ENCODE measurements at regions of chr19 and their contacts with region 1.

Region 1: GRCh38 chr19:14472202-14472938 is 2.8 kb downstream of the PTGER1 start:
- DNase-seq: peak; percentile 65 to 94 (median 82)
- ATAC-seq: peak; percentile 85
- H3K4me3 ChIP-seq: peak overlapping the region; percentile 55
- H3K4me3 Mint-ChIP-seq: peak overlapping the region; percentile 25 to 84 (median 68)
- H3K27ac ChIP-seq: no peak overlapping the region
- H3K27ac Mint-ChIP-seq: peak overlapping the region in 1 of 9 donors; percentile 41
- H3K4me1 ChIP-seq: peaks cover 4 to 17% of the 10 kb centered on the region in 2 donors
- H3K4me1 Mint-ChIP-seq: peaks cover 0 to 39% (median 29%) of the 10 kb centered on the region in 7 donors
- H3K27me3 ChIP-seq: peaks cover 0 to 4% of the 10 kb centered on the region in 2 donors
- H3K27me3 Mint-ChIP-seq: peaks cover 6 to 19% (median 12%) of the 10 kb centered on the region in 5 donors

Region 2: GRCh38 chr19:14354445-14354844 is 117.9 kb before region 1 on chr19:
- CTCF ChIA-PET with region 1: interaction called, 5 read pairs
- POLR2A ChIA-PET with region 1: no interaction called
- intact Hi-C with region 1: loop called in 1 of 2 experiments (anchors 10 kb)
- DNase-seq: no peak
- ATAC-seq: no peak
- H3K4me3 ChIP-seq: no peak overlapping the region
- H3K4me3 Mint-ChIP-seq: peak overlapping the region in 1 of 10 donors; percentile 13
- H3K27ac ChIP-seq: peak overlapping the region; percentile 7
- H3K27ac Mint-ChIP-seq: peak overlapping the region in 5 of 9 donors; percentile 25 to 99 (median 95)
- H3K4me1 ChIP-seq: peaks cover 13 to 32% of the 10 kb centered on the region in 2 donors
- H3K4me1 Mint-ChIP-seq: peaks cover 27 to 51% (median 40%) of the 10 kb centered on the region in 7 donors
- H3K27me3 ChIP-seq: no peaks in the 10 kb centered on the region
- H3K27me3 Mint-ChIP-seq: no peaks in the 10 kb centered on the region

Region 3: GRCh38 chr19:14405758-14406644 is 66.4 kb before region 1 on chr19:
- CTCF ChIA-PET with region 1: no interaction called
- POLR2A ChIA-PET with region 1: no interaction called
- intact Hi-C with region 1: no loop called
- DNase-seq: peak; percentile 85 to 96 (median 91)
- ATAC-seq: peak; percentile 76
- H3K4me3 ChIP-seq: no peak overlapping the region
- H3K4me3 Mint-ChIP-seq: peak overlapping the region in 1 of 10 donors; percentile 12
- H3K27ac ChIP-seq: peak overlapping the region; percentile 54
- H3K27ac Mint-ChIP-seq: peak overlapping the region; percentile 58 to 85 (median 60)
- H3K4me1 ChIP-seq: peaks cover 8 to 25% of the 10 kb centered on the region in 2 donors
- H3K4me1 Mint-ChIP-seq: peaks cover 6 to 26% (median 20%) of the 10 kb centered on the region in 7 donors
- H3K27me3 ChIP-seq: no peaks in the 10 kb centered on the region
- H3K27me3 Mint-ChIP-seq: no peaks in the 10 kb centered on the region

Region 4: GRCh38 chr19:14556662-14557188 is 84.4 kb after region 1 on chr19:
- CTCF ChIA-PET with region 1: interaction called, 6 read pairs
- POLR2A ChIA-PET with region 1: interaction called, 3 read pairs
- intact Hi-C with region 1: loop called in 1 of 2 experiments (anchors 1 kb)
- DNase-seq: peak; percentile 42 to 75 (median 60)
- ATAC-seq: peak; percentile 91
- H3K4me3 ChIP-seq: peak overlapping the region; percentile 10
- H3K4me3 Mint-ChIP-seq: peak overlapping the region; percentile 29 to 79 (median 68)
- H3K27ac ChIP-seq: no peak overlapping the region
- H3K27ac Mint-ChIP-seq: peak overlapping the region in 8 of 9 donors; percentile 79 to 90 (median 84)
- H3K4me1 ChIP-seq: peaks cover 15 to 53% of the 10 kb centered on the region in 2 donors
- H3K4me1 Mint-ChIP-seq: peaks cover 28 to 71% (median 40%) of the 10 kb centered on the region in 7 donors
- H3K27me3 ChIP-seq: no peaks in the 10 kb centered on the region
- H3K27me3 Mint-ChIP-seq: no peaks in the 10 kb centered on the region

Region 5: DNA sequence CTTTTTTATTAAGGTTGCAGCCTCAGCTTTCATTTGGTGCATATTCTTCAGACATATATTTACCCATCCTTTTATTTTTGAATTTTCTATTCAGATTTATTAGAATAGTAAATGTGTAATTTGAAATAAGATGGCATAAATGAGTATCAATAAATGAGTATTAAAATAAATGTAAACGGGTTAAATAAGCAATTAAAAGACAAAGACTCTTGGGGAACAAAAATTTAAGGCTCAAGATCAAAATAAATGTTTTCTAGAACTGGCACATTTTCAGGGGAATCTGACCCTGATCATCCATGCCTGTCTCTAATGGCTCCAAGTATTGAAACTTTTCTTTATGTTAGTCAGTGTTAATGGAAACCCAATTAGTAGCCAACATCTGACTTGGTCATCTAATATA is 1268.4 kb after region 1 on chr19:
- CTCF ChIA-PET with region 1: no interaction called
- POLR2A ChIA-PET with region 1: no interaction called
- intact Hi-C with region 1: no loop called
- DNase-seq: no peak
- ATAC-seq: no peak
- H3K4me3 ChIP-seq: no peak overlapping the region
- H3K4me3 Mint-ChIP-seq: no peak overlapping the region
- H3K27ac ChIP-seq: no peak overlapping the region
- H3K27ac Mint-ChIP-seq: no peak overlapping the region
- H3K4me1 ChIP-seq: no peaks in the 10 kb centered on the region
- H3K4me1 Mint-ChIP-seq: peaks cover 0 to 3% (median 0%) of the 10 kb centered on the region in 7 donors
- H3K27me3 ChIP-seq: peaks cover 0 to 12% of the 10 kb centered on the region in 2 donors
- H3K27me3 Mint-ChIP-seq: peaks cover 7 to 34% (median 32%) of the 10 kb centered on the region in 5 donors

Measured in naive thymus-derived CD4-positive, alpha-beta T cell (primary cell).